MCF 10A (cell line): ENCODE measurements at regions of chr3 and their contacts with region 1.

Region 1: DNA sequence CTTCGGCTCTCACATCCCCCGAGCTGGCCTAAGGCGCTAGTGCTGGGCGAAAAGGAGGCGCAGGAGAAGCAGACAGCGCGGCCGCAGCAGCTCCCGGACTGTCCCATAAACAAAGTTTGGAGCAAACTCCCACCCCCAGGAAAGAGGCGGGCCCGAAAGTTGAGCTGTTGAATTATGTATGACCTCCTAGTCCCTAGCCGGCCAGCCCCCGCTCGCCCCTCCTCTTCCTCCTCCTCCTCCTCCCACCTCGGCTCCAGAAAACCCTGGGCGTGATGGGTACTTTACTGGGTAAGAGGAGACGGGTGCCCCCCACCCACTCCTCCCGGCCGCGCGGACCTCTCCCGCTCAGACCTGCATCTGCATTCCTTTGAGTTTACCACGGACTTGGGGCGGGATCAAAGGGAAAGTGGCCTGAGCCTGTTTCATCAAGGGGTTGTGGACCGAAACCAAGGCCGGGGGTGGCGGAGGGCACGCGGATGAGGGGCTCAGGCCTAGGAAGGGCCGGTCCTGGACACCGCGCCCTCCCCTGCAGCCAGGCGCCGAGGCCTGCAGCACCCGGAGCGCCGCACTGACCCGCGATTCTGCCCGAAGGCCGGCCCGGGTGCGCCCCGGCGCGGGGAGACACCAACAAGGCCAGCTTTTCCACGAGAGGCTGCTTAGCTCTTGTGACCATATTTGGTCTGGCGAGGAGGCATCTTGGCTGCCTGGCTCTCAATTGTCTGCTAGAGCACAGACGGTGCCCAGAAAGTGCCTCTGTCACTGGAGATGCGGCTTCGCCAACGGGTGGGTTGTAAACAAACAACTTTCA is at the start of gene WWTR1:
- DNase-seq: peak; percentile 99
- H3K4me3 Mint-ChIP-seq: peak within 1 kb of the TSS; percentile 100
- H3K27ac Mint-ChIP-seq: peak within 1 kb of the TSS; percentile 99
- H3K4me1 Mint-ChIP-seq: peaks cover 30% of the 10 kb centered on the region
- H3K27me3 Mint-ChIP-seq: no peaks in the 10 kb centered on the region
- CTCF ChIP-seq: peak; percentile 15
- total RNA-seq, gene WWTR1: 52.9 and 54.9 TPM in 2 replicates

Region 2: DNA sequence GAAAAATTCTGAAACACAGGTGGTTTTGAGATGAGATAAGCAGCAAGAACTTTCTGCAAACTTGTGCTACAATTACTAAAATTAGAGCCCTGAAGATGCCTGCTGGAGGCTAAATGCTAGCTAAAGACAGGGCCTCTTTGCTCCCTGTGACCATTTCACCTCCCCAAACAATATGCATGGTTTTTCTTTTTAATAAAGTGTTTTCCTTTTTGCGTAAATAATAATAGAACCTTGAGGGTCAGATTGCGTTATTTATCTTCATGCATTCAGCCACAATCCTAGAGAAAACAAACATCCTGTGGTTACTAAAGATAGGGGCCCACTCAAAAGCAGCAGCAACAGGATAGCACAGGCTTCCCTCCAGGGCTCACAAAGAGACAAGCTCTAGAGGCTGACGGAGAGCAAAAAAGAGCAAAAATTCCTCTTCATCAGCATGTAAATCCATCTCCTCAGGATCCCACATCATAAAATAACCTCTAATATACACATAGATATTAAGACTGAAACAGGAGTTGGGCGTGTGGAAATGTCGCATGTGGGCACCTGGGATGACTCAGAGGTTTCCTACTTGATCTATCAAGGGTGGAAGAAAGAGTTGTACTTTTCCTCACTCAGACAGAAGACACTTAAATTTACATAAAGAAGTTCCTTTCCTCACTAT is 410.0 kb before region 1 on chr3:
- CTCF ChIA-PET with region 1: no interaction called
- POLR2A ChIA-PET with region 1: no interaction called
- intact Hi-C with region 1: no loop called
- DNase-seq: peak; percentile 52
- H3K4me3 Mint-ChIP-seq: no peak overlapping the region
- H3K27ac Mint-ChIP-seq: peak overlapping the region; percentile 85
- H3K4me1 Mint-ChIP-seq: peaks cover 29% of the 10 kb centered on the region
- H3K27me3 Mint-ChIP-seq: no peaks in the 10 kb centered on the region
- CTCF ChIP-seq: no peak

Region 3: GRCh38 chr3:149512209-149512782 is 145.8 kb before region 1 on chr3:
- CTCF ChIA-PET with region 1: interaction called, 11 read pairs
- POLR2A ChIA-PET with region 1: interaction called, 3 read pairs
- intact Hi-C with region 1: loop called (anchors 5 kb)
- DNase-seq: peak; percentile 67
- H3K4me3 Mint-ChIP-seq: no peak overlapping the region
- H3K27ac Mint-ChIP-seq: no peak overlapping the region
- H3K4me1 Mint-ChIP-seq: peaks cover 19% of the 10 kb centered on the region
- H3K27me3 Mint-ChIP-seq: no peaks in the 10 kb centered on the region
- CTCF ChIP-seq: peak; percentile 61

Region 4: GRCh38 chr3:149547938-149548668 is 110.0 kb before region 1 on chr3:
- CTCF ChIA-PET with region 1: interaction called, 3 read pairs
- POLR2A ChIA-PET with region 1: interaction called, 12 read pairs
- intact Hi-C with region 1: no loop called
- DNase-seq: peak; percentile 86
- H3K4me3 Mint-ChIP-seq: peak overlapping the region; percentile 66
- H3K27ac Mint-ChIP-seq: peak overlapping the region; percentile 94
- H3K4me1 Mint-ChIP-seq: peaks cover 18% of the 10 kb centered on the region
- H3K27me3 Mint-ChIP-seq: no peaks in the 10 kb centered on the region
- CTCF ChIP-seq: no peak

Region 5: DNA sequence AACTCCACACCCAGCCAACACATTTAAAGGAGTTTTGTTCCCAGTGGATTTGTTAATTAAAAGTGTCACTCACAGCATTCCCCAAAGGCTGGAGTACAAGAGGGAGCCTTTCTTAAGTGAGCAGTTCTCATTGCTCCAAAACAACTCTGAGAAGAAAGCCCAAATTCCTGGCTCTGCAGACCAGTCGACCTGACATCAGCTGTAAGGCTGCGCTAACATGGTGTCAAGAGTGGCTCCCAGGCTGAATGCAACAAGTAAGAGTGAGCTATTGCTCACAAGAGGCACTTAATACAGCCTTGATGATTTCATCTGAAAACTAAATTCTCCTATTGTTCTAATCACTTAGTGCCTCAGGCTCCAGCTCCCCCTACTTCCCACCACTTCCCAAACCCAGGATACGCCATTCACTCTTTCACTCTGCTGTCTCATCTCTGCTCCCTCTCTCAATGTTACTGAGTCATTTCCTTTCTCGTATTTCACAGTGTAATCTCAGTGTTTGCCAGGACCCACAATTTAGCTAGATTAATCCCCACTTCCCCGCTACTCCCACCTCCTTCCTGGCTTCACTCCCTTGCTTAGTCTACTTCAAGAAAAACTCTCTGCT is 82.1 kb before region 1 on chr3:
- CTCF ChIA-PET with region 1: interaction called, 51 read pairs
- POLR2A ChIA-PET with region 1: interaction called, 83 read pairs
- intact Hi-C with region 1: no loop called
- DNase-seq: peak; percentile 98
- H3K4me3 Mint-ChIP-seq: peak overlapping the region; percentile 55
- H3K27ac Mint-ChIP-seq: peak overlapping the region; percentile 77
- H3K4me1 Mint-ChIP-seq: peaks cover 66% of the 10 kb centered on the region
- H3K27me3 Mint-ChIP-seq: no peaks in the 10 kb centered on the region
- CTCF ChIP-seq: no peak

Region 6: GRCh38 chr3:149621218-149622005 is 36.7 kb before region 1 on chr3:
- CTCF ChIA-PET with region 1: interaction called, 6 read pairs
- POLR2A ChIA-PET with region 1: interaction called, 19 read pairs
- intact Hi-C with region 1: no loop called
- DNase-seq: peak; percentile 78
- H3K4me3 Mint-ChIP-seq: no peak overlapping the region
- H3K27ac Mint-ChIP-seq: peak overlapping the region; percentile 28
- H3K4me1 Mint-ChIP-seq: peaks cover 40% of the 10 kb centered on the region
- H3K27me3 Mint-ChIP-seq: no peaks in the 10 kb centered on the region
- CTCF ChIP-seq: no peak

Region 7: DNA sequence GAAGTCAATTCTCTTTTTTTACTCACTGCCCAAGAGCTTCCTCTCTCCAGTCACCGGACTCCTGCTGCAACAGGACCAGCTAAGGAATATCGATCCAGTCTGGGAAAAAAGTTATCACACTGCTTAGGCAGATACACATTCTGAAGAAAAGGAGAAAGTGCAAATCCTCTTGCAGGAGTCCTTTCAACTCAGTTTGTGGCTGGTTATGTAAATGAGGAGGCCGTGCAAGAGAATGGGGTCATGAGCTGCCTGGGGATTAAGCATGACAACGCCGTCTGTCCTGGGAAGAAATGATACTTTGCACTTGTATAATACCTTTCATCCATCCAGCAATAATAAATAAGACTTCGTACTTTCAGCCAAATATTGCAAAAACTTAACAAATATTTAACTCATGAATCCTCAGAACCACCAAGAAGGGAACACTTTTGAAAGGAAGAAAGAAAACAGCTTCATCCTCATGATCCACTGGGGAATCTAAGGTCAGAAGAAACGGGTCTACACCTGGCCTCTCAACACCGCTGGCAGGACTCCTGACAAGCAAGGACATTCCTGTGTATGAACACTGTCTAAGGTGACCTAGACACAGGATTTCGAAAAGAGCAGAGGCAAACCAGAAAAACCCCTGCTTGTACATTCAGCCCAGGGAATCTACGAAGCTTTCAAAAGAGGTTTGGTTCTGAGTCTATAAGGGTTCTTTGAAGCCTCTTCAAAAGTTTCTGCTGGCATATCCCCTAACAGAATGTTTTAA is 12.8 kb after region 1 on chr3:
- CTCF ChIA-PET with region 1: no interaction called
- POLR2A ChIA-PET with region 1: interaction called, 14 read pairs
- intact Hi-C with region 1: no loop called
- DNase-seq: no peak
- H3K4me3 Mint-ChIP-seq: no peak overlapping the region
- H3K27ac Mint-ChIP-seq: no peak overlapping the region
- H3K4me1 Mint-ChIP-seq: no peaks in the 10 kb centered on the region
- H3K27me3 Mint-ChIP-seq: no peaks in the 10 kb centered on the region
- CTCF ChIP-seq: no peak

Region 8: GRCh38 chr3:149812606-149813366 is 154.7 kb after region 1 on chr3 and contains the start of gene RNF13:
- CTCF ChIA-PET with region 1: interaction called, 5 read pairs
- POLR2A ChIA-PET with region 1: interaction called, 12 read pairs
- intact Hi-C with region 1: no loop called
- DNase-seq: peak; percentile 94
- H3K4me3 Mint-ChIP-seq: peak within 1 kb of the TSS; percentile 83
- H3K27ac Mint-ChIP-seq: peak within 1 kb of the TSS; percentile 98
- H3K4me1 Mint-ChIP-seq: peaks cover 39% of the 10 kb centered on the region
- H3K27me3 Mint-ChIP-seq: no peaks in the 10 kb centered on the region
- CTCF ChIP-seq: no peak
- total RNA-seq, gene RNF13: 36.5 and 40.4 TPM in 2 replicates